ENCODE measurements at regions of chr4 and their contacts with region 1.

Region 1: DNA sequence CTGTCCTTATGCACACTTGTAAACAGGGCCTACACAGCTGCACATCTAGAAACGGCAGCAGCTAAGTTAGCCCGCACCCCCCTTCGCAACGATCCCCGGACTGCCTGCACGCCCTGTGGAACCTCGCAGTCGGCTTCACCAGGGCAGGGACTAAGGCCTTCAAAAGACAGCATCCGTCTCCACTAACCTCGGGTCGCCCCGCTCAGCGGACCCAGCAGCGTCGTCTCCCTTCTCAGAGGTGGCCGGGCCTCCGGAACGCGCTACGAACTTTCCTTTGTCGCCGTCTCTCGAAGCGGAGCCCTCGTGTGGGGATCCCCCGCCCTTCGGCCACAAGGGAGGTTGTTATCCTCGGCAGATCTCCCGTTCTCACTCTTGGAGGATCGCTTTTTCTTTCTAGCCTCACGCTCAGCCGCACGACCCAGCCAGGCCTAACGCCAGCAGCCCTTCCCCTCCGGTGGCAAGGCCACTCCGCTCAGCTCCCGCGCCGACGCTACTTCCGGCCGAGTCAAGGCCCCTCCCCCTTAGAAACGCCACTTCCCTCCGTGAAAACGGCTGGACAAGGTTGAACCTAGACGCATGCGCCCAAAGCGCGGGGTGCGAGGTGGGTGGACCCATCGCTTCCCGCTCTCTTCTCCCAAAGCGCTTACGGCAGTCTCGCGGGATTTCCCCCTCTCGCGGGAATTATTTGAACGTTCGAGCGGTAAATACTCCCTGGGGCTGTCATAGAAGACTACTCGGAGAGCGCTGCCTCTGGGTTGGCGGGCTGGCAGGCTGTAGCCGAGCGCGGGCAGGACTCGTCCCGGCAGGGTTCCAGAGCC is at the starts of genes DCAF16 and NCAPG:
- DNase-seq: peak; percentile 99
- ATAC-seq: peak; percentile 91
- H3K4me3 Mint-ChIP-seq: peak within 1 kb of the TSS; percentile 98
- H3K27ac Mint-ChIP-seq: peak within 1 kb of the TSS; percentile 100
- H3K4me1 Mint-ChIP-seq: peaks cover 42% of the 10 kb centered on the region
- H3K27me3 Mint-ChIP-seq: no peaks in the 10 kb centered on the region
- total RNA-seq, gene DCAF16: 40.3 to 47.5 TPM
- total RNA-seq, gene NCAPG: 73.8 to 82.8 TPM

Region 2: DNA sequence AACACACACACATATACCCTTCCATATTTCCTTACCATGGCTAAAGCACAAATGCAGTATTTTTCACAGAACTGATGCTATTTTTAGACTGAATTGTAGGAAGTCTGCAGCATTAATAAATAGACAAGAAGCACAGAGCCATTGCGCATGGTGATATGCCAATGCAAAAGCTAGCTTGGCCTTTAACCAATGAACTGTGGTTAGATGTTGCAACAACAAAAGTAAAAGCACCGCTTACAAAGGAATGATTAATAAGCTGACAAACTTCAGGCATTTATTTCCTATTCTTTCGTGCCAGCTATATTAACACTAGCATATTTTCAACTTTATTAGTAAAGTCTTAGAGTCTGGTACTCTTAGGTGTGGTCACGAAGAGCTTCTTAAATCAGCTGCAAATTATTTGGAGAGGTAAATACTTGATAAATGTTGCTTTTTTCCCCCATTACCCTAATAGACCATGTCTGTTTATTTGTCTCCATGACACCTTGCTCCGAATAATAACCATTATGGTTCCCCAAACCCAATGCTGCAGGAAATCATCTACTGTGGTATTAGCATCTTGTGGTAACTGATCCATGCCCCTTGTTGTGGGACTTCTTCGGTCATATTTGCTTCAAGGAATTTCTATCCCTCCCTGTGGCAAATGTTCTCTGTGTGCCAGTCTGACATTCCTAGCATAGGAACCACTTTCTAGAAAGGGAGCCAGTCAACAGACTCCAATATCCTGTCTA is 1278.1 kb before region 1 on chr4:
- CTCF ChIA-PET with region 1: no interaction called
- POLR2A ChIA-PET with region 1: no interaction called
- intact Hi-C with region 1: no loop called
- DNase-seq: no peak
- ATAC-seq: no peak
- H3K4me3 Mint-ChIP-seq: no peak overlapping the region
- H3K27ac Mint-ChIP-seq: no peak overlapping the region
- H3K4me1 Mint-ChIP-seq: no peaks in the 10 kb centered on the region
- H3K27me3 Mint-ChIP-seq: peaks cover 3% of the 10 kb centered on the region

Region 3: DNA sequence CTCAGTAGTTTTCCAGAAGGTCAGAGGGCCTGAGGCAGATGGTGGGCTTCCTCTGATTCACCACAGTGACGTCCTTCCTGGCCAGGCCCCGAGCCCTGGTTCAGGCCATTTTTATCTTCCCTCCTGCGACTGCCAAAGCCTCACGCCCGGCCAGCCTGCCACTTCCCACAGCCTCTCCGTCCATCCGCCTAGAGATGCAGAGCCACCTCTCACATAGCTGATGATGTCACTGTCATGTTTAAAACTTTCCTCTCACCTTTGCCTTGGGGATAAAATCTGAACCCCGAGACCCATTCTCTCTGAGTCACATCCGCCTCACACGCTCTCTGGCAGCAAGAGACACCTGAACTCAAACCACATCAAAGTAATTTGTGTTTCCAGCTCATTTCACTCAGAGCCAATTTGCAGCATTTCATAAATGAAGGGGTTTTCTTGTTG is 473.9 kb before region 1 on chr4:
- CTCF ChIA-PET with region 1: no interaction called
- POLR2A ChIA-PET with region 1: no interaction called
- intact Hi-C with region 1: loop called (anchors 1 to 10 kb)
- DNase-seq: peak; percentile 86
- ATAC-seq: peak; percentile 93
- H3K4me3 Mint-ChIP-seq: peak overlapping the region; percentile 54
- H3K27ac Mint-ChIP-seq: peak overlapping the region; percentile 92
- H3K4me1 Mint-ChIP-seq: peaks cover 45% of the 10 kb centered on the region
- H3K27me3 Mint-ChIP-seq: no peaks in the 10 kb centered on the region

Region 4: DNA sequence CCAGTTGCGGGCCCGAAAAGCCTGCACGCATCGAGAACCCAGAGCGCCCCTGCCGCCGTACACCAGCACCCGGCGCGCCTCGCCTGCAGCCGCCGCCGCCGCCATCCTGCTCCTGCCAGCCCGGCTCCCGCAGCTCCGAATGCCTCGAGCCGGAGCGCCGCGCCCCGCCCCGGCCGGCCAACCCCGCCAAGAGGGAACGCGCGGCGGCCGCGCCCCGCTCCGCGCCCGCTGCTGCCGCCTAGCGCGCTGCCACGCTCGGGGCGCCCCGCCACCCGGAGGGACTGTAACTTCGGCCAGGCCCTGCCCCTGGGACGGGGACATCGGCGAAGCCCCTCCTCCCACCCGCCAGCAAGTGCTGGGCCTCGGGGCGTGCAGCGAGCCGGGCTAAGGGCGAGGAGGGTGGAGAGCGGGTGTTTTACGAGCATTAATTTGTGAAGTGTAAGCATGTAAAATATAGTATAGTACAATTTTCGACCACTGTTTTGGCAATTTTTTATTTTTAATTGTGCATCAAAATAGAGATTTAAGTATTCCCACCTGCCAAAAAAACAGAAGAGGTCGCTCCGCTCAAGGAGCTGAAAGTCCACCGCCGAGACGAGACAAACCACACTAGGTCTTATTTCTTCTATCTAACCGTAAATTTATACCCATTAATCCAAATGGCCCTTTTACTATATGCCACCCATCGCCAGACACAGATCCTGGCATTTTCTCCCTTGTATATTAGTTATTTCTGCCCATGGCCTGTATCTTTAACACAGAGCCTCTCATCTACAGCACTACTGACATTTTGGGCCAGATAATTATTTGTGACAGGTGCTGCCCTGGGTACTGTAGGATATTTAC is 298.3 kb before region 1 on chr4 and contains the start of gene QDPR:
- CTCF ChIA-PET with region 1: interaction called, 4 read pairs
- POLR2A ChIA-PET with region 1: no interaction called
- intact Hi-C with region 1: loop called (anchors 1 to 10 kb)
- DNase-seq: peak; percentile 88
- ATAC-seq: peak; percentile 95
- H3K4me3 Mint-ChIP-seq: peak within 1 kb of the TSS; percentile 78
- H3K27ac Mint-ChIP-seq: peak within 1 kb of the TSS; percentile 85
- H3K4me1 Mint-ChIP-seq: peaks cover 23% of the 10 kb centered on the region
- H3K27me3 Mint-ChIP-seq: no peaks in the 10 kb centered on the region
- total RNA-seq, gene QDPR: 34.5 to 34.6 TPM

Region 5: GRCh38 chr4:17576932-17577665 is 233.4 kb before region 1 on chr4 and contains the start of gene LAP3:
- CTCF ChIA-PET with region 1: interaction called, 10 read pairs
- POLR2A ChIA-PET with region 1: interaction called, 4 read pairs
- intact Hi-C with region 1: loop called (anchors 1 kb)
- DNase-seq: peak; percentile 99
- ATAC-seq: peak; percentile 85
- H3K4me3 Mint-ChIP-seq: peak within 1 kb of the TSS; percentile 91
- H3K27ac Mint-ChIP-seq: peak within 1 kb of the TSS; percentile 94
- H3K4me1 Mint-ChIP-seq: peaks cover 29% of the 10 kb centered on the region
- H3K27me3 Mint-ChIP-seq: no peaks in the 10 kb centered on the region
- total RNA-seq, gene LAP3: 126 to 128 TPM

Region 6: GRCh38 chr4:17636696-17637622 is 173.5 kb before region 1 on chr4:
- CTCF ChIA-PET with region 1: no interaction called
- POLR2A ChIA-PET with region 1: no interaction called
- intact Hi-C with region 1: loop called in 1 of 2 experiments (anchors 5 kb)
- DNase-seq: peak; percentile 87
- ATAC-seq: peak; percentile 95
- H3K4me3 Mint-ChIP-seq: no peak overlapping the region
- H3K27ac Mint-ChIP-seq: no peak overlapping the region
- H3K4me1 Mint-ChIP-seq: no peaks in the 10 kb centered on the region
- H3K27me3 Mint-ChIP-seq: no peaks in the 10 kb centered on the region

Region 7: GRCh38 chr4:17866810-17867209 is 56.3 kb after region 1 on chr4:
- CTCF ChIA-PET with region 1: no interaction called
- POLR2A ChIA-PET with region 1: no interaction called
- intact Hi-C with region 1: no loop called
- DNase-seq: no peak
- ATAC-seq: no peak
- H3K4me3 Mint-ChIP-seq: no peak overlapping the region
- H3K27ac Mint-ChIP-seq: no peak overlapping the region
- H3K4me1 Mint-ChIP-seq: no peaks in the 10 kb centered on the region
- H3K27me3 Mint-ChIP-seq: no peaks in the 10 kb centered on the region

Region 8: GRCh38 chr4:17934286-17934685 is 123.8 kb after region 1 on chr4:
- CTCF ChIA-PET with region 1: no interaction called
- POLR2A ChIA-PET with region 1: no interaction called
- intact Hi-C with region 1: no loop called
- DNase-seq: no peak
- ATAC-seq: no peak
- H3K4me3 Mint-ChIP-seq: no peak overlapping the region
- H3K27ac Mint-ChIP-seq: no peak overlapping the region
- H3K4me1 Mint-ChIP-seq: no peaks in the 10 kb centered on the region
- H3K27me3 Mint-ChIP-seq: no peaks in the 10 kb centered on the region

Region 9: DNA sequence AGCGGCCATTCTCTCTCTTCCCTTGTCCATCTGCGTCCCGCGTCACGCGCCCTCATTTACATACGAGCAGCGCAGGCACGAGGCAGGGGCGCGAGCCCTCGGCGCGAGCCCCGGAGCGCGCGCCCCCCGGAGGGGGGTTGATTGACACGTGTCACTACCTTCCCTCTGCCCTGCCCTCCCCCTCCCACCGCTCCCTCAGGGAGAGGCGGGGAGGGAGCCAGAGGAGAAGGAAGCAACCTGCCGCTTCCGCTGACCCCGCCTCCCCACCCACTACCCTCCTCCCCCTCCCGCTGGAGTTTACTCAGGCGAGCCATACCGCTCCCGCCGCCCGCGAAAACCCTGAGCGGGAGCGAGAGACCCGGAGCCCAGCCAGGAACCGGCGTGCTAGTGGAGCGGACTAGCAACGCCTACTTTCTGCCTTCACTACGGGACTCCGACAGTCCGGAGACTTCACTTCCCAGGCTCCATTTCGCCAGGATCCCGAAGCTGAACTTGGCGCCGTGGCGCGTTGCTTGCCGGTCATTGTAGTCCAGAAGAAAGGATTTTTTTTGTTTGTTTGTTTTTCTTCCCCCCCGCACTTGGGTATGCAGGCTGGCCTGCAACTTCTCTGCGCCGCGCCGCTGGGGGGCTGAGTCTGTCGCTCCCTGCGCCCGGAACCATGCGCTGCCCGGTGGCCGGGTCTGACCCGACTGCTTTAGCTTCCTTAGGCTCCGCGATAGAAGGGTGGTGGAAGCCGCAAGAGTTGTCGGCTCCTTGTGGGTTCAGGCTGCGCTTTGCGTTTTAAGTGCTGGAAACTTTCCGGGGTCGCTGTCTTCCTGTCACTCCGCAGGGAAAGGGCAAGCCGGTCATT is 211.5 kb after region 1 on chr4 and contains the start of gene LCORL:
- CTCF ChIA-PET with region 1: no interaction called
- POLR2A ChIA-PET with region 1: interaction called, 3 read pairs
- intact Hi-C with region 1: loop called (anchors 1 kb)
- DNase-seq: peak; percentile 91
- ATAC-seq: peak; percentile 88
- H3K4me3 Mint-ChIP-seq: peak within 1 kb of the TSS; percentile 98
- H3K27ac Mint-ChIP-seq: peak within 1 kb of the TSS; percentile 91
- H3K4me1 Mint-ChIP-seq: peaks cover 13% of the 10 kb centered on the region
- H3K27me3 Mint-ChIP-seq: peaks cover 25% of the 10 kb centered on the region
- total RNA-seq, gene LCORL: 6.7 to 8.0 TPM

Measured in activated CD4-positive, alpha-beta T cell treated with anti-CD3 and anti-CD28 coated beads for 36 hours (primary cell).